Activated naive CD4-positive, alpha-beta T cell treated with anti-CD3 and anti-CD28 coated beads for 36 hours (primary cell): ENCODE measurements at regions of chr19 and their contacts with region 1.

Region 1: DNA sequence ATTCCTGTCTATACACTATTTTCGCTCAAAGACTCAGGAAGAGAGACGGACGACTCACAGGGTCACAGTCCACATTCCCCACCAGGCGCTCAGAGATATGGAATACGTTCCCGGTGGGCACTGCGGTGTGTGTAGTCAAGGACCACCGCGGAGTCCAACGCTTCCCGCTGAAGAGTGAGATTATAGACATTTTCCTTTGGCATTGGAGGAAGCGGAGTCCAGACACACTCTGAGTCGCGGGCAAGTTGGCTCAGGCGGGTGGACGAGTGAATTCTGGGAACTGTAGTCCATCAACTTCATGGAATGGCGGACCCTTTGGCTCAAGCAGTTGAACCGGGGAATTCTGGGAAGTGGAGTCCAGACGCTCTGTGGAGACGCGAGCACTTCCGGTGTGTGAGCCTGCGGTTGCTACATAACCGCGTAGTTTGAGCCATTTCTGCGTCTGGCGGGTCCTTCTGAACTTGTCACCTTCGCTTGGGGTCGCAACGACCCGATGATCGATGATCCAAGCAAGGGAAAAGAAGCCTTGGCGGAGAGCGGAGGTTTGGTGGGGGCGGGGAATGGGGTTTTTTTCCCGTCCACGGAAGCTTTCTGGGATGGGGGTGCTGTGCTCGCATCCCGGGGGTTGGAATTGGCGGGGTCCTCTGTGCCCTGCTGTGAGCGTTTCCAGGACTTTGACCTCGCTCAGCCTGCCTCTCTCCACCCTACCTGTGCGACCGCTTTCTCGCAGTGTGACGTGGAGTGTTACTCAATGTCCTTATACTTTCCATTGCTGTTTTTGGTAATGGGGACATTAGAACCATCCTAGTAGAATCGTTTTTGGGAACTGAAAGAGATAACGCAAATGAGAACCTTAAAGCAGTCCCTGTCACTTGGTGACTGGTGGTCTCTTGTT is at the start of gene ZNF230:
- DNase-seq: peak; percentile 92
- H3K4me3 Mint-ChIP-seq: peak within 1 kb of the TSS; percentile 99
- H3K27ac Mint-ChIP-seq: peak within 1 kb of the TSS; percentile 92
- H3K4me1 Mint-ChIP-seq: peaks cover 13% of the 10 kb centered on the region
- H3K27me3 Mint-ChIP-seq: no peaks in the 10 kb centered on the region
- total RNA-seq, gene ZNF230: 2.7 to 3.3 TPM

Region 2: GRCh38 chr19:43934985-43935708 is 67.7 kb before region 1 on chr19 and contains the start of gene ZNF45:
- CTCF ChIA-PET with region 1: no interaction called
- intact Hi-C with region 1: loop called (anchors 2 kb)
- DNase-seq: peak; percentile 91
- H3K4me3 Mint-ChIP-seq: peak within 1 kb of the TSS; percentile 92
- H3K27ac Mint-ChIP-seq: peak within 1 kb of the TSS; percentile 89
- H3K4me1 Mint-ChIP-seq: peaks cover 24% of the 10 kb centered on the region
- H3K27me3 Mint-ChIP-seq: no peaks in the 10 kb centered on the region
- total RNA-seq, gene ZNF45: 5.4 to 6.3 TPM

Region 3: DNA sequence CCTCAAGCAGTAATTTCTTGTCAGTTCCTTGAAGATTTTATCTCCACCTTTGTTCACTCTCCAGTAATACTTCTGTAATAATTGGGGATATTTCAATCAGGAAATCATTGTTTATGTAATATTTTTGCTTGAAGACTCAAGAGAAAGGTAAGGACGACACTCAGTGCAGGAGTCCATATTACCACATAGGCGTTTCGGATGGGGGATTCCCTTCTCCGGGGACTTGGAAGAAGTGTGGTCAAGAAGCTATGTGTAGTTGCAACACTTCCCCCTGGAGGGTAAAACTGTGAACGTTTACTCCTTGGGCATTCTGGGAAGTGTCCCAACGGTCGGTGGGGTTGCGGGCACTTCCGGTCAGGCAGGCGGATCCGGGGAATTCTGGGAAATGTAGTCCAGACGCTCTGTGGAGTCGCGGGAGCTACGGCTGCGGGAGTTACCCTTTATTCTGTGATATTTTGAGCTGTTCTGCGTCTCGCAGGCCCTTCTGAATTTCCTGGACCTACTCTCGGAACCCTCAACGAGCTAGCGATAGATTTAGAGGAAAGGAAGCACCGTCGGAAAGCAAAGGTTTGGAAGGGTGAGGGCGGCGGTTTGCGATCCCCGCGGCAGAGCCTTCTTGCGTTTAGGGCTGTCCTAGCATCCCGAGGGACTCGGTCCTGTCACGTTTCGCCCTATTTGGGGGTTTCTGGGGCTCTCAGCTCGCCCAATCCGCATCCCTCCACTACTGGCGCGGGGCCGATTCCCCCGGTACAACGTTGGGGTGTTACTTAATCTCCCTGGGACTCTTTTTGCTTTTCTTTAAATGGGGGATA is 51.8 kb before region 1 on chr19 and contains the start of gene ZNF221:
- CTCF ChIA-PET with region 1: no interaction called
- intact Hi-C with region 1: no loop called
- DNase-seq: peak; percentile 79
- H3K4me3 Mint-ChIP-seq: peak within 1 kb of the TSS; percentile 94
- H3K27ac Mint-ChIP-seq: peak within 1 kb of the TSS; percentile 77
- H3K4me1 Mint-ChIP-seq: peaks cover 5% of the 10 kb centered on the region
- H3K27me3 Mint-ChIP-seq: peaks cover 4% of the 10 kb centered on the region
- total RNA-seq, gene ZNF221: 0.45 to 0.89 TPM

Region 4: GRCh38 chr19:44025217-44025936 is 22.6 kb after region 1 on chr19 and contains the start of gene ZNF222:
- CTCF ChIA-PET with region 1: interaction called, 5 read pairs
- intact Hi-C with region 1: loop called (anchors 1 kb)
- DNase-seq: peak; percentile 92
- H3K4me3 Mint-ChIP-seq: peak within 1 kb of the TSS; percentile 87
- H3K27ac Mint-ChIP-seq: peak within 1 kb of the TSS; percentile 77
- H3K4me1 Mint-ChIP-seq: peaks cover 15% of the 10 kb centered on the region
- H3K27me3 Mint-ChIP-seq: no peaks in the 10 kb centered on the region
- total RNA-seq, gene ZNF222: 0.74 to 1.1 TPM

Region 5: GRCh38 chr19:44093931-44094765 is 91.3 kb after region 1 on chr19 and contains the start of gene ZNF224:
- CTCF ChIA-PET with region 1: no interaction called
- intact Hi-C with region 1: loop called (anchors 1 kb)
- DNase-seq: peak; percentile 91
- H3K4me3 Mint-ChIP-seq: peak within 1 kb of the TSS; percentile 98
- H3K27ac Mint-ChIP-seq: peak within 1 kb of the TSS; percentile 87
- H3K4me1 Mint-ChIP-seq: peaks cover 13% of the 10 kb centered on the region
- H3K27me3 Mint-ChIP-seq: no peaks in the 10 kb centered on the region
- total RNA-seq, gene ZNF224: 8.7 to 10.9 TPM

Region 6: GRCh38 chr19:44164673-44165512 is 162.1 kb after region 1 on chr19 and contains the start of gene ZNF226:
- CTCF ChIA-PET with region 1: no interaction called
- intact Hi-C with region 1: loop called (anchors 10 kb)
- DNase-seq: peak; percentile 90
- H3K4me3 Mint-ChIP-seq: peak within 1 kb of the TSS; percentile 94
- H3K27ac Mint-ChIP-seq: peak within 1 kb of the TSS; percentile 93
- H3K4me1 Mint-ChIP-seq: peaks cover 27% of the 10 kb centered on the region
- H3K27me3 Mint-ChIP-seq: no peaks in the 10 kb centered on the region
- total RNA-seq, gene ZNF226: 12.4 to 16.9 TPM